Transverse colon (tissue), 4 donors: ENCODE measurements at regions of chr9 and their contacts with region 1.

Region 1: GRCh38 chr9:90142580-90142979 is 500.0 kb downstream of the DIRAS2 start:
- DNase-seq: peak; percentile 69
- H3K4me3 ChIP-seq: no peak overlapping the region
- H3K27ac ChIP-seq: no peak overlapping the region
- H3K4me1 ChIP-seq: peaks cover 0 to 9% (median 0%) of the 10 kb centered on the region in 4 donors
- H3K27me3 ChIP-seq: no peaks in the 10 kb centered on the region
- CTCF ChIP-seq: peak; percentile 50 to 75 (median 65)
- EP300 ChIP-seq: no peak
- POLR2A ChIP-seq: no peak

Region 2: DNA sequence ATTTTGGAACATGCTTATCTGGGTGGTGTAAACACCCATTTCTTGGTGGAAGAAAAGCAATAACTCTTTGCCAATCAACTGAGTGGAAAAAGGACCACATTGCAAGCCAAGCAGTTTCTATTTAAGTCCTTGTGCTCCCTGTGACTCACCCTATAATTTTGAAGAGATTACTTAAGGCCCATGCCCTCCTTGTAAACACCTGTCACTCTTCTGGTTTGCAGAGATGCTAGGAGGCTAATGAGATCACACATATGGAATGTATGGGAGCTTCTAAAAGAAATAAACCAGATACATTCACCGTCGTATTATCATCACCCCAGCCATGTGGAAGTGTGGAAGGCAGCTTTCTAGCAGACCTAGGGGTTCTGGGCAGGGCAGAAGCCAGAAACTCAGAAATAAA is 200.7 kb before region 1 on chr9:
- in situ Hi-C with region 1: no loop called
- intact Hi-C with region 1: no loop called
- DNase-seq: no peak
- H3K4me3 ChIP-seq: no peak overlapping the region
- H3K27ac ChIP-seq: peak overlapping the region; percentile 13 to 77 (median 46)
- H3K4me1 ChIP-seq: peaks cover 5 to 13% (median 9%) of the 10 kb centered on the region in 4 donors
- H3K27me3 ChIP-seq: no peaks in the 10 kb centered on the region
- CTCF ChIP-seq: no peak
- EP300 ChIP-seq: peak; percentile 55
- POLR2A ChIP-seq: no peak

Region 3: GRCh38 chr9:90070931-90071660 is 71.5 kb before region 1 on chr9:
- in situ Hi-C with region 1: no loop called
- intact Hi-C with region 1: no loop called
- DNase-seq: no peak
- H3K4me3 ChIP-seq: no peak overlapping the region
- H3K27ac ChIP-seq: no peak overlapping the region
- H3K4me1 ChIP-seq: no peaks in the 10 kb centered on the region
- H3K27me3 ChIP-seq: no peaks in the 10 kb centered on the region
- CTCF ChIP-seq: no peak
- EP300 ChIP-seq: no peak
- POLR2A ChIP-seq: no peak

Region 4: DNA sequence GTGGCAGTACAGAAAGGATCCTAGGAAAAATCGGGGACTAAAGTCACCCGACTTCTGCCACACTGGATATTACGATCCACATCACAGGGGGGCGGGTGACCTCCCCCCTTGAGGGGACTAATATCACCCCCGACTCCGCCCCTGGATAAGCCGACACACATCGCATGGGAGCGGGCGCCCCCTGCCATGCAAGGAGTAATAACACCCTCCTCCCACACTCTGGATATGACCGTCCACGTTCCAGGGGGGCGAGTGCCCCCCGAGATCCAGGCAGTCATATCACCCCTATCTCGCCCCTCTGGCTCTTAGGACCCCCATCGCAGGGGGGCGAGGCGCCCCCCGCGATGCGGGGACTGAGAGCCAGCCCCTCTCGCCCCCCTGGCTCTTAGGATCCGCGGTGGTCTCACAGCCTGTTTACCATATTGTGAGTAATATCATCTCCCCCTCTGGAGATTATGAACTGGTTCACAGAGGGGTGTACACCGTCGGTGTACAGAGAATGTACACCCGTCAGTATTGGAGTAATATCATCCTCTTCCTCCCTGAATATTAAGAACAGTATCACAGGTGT is 77.1 kb after region 1 on chr9:
- in situ Hi-C with region 1: loop called in 2 of 4 experiments (anchors 5 kb)
- intact Hi-C with region 1: no loop called
- DNase-seq: peak; percentile 41
- H3K4me3 ChIP-seq: peak overlapping the region in 1 of 4 donors; percentile 16
- H3K27ac ChIP-seq: no peak overlapping the region
- H3K4me1 ChIP-seq: peaks cover 0 to 6% (median 3%) of the 10 kb centered on the region in 4 donors
- H3K27me3 ChIP-seq: peaks cover 5% of the 10 kb centered on the region
- CTCF ChIP-seq: peak; percentile 49 to 79 (median 64)
- EP300 ChIP-seq: no peak
- POLR2A ChIP-seq: no peak

Region 5: DNA sequence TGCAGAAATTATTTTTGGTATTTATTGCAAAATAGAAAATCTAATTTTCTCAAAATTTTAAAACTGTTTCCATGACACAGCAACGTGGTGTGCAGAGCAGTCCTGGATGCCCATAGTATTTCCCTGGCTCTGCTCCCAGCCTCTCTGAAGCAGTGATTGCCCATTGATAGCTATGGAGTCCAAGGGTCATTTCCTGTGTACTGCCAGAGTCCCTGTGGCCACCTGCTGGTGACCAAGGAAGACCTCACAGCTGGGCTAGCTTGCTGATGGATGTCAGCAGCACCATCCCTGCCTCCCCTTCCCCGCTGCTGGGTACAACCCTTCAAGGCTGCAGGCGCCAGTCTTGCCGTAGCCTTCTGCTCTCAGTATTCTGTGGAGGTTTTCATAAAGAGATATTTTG is 315.9 kb after region 1 on chr9:
- in situ Hi-C with region 1: loop called in 1 of 4 experiments (anchors 25 kb)
- intact Hi-C with region 1: no loop called
- DNase-seq: peak; percentile 80
- H3K4me3 ChIP-seq: no peak overlapping the region
- H3K27ac ChIP-seq: no peak overlapping the region
- H3K4me1 ChIP-seq: peaks cover 0 to 12% (median 0%) of the 10 kb centered on the region in 4 donors
- H3K27me3 ChIP-seq: no peaks in the 10 kb centered on the region
- CTCF ChIP-seq: peak; percentile 20 to 75 (median 55)
- EP300 ChIP-seq: no peak
- POLR2A ChIP-seq: no peak

Region 6: GRCh38 chr9:90767523-90768100 is 625.0 kb after region 1 on chr9:
- in situ Hi-C with region 1: loop called in 3 of 4 experiments (anchors 10 to 25 kb)
- intact Hi-C with region 1: no loop called
- DNase-seq: no peak
- H3K4me3 ChIP-seq: no peak overlapping the region
- H3K27ac ChIP-seq: no peak overlapping the region
- H3K4me1 ChIP-seq: no peaks in the 10 kb centered on the region
- H3K27me3 ChIP-seq: no peaks in the 10 kb centered on the region
- CTCF ChIP-seq: no peak
- EP300 ChIP-seq: no peak
- POLR2A ChIP-seq: no peak

Region 7: GRCh38 chr9:90773617-90774016 is 631.0 kb after region 1 on chr9:
- in situ Hi-C with region 1: loop called in 3 of 4 experiments (anchors 10 to 25 kb)
- intact Hi-C with region 1: no loop called
- DNase-seq: peak; percentile 26
- H3K4me3 ChIP-seq: no peak overlapping the region
- H3K27ac ChIP-seq: no peak overlapping the region
- H3K4me1 ChIP-seq: no peaks in the 10 kb centered on the region
- H3K27me3 ChIP-seq: no peaks in the 10 kb centered on the region
- CTCF ChIP-seq: peak; percentile 7 to 31 (median 29)
- EP300 ChIP-seq: no peak
- POLR2A ChIP-seq: no peak

Region 8: GRCh38 chr9:90860826-90861225 is 718.2 kb after region 1 on chr9:
- in situ Hi-C with region 1: loop called in 2 of 4 experiments (anchors 10 to 25 kb)
- intact Hi-C with region 1: loop called (anchors 10 kb)
- DNase-seq: no peak
- H3K4me3 ChIP-seq: no peak overlapping the region
- H3K27ac ChIP-seq: no peak overlapping the region
- H3K4me1 ChIP-seq: no peaks in the 10 kb centered on the region
- H3K27me3 ChIP-seq: no peaks in the 10 kb centered on the region
- CTCF ChIP-seq: no peak
- EP300 ChIP-seq: no peak
- POLR2A ChIP-seq: no peak

Region 9: GRCh38 chr9:90870621-90871326 is 728.2 kb after region 1 on chr9:
- in situ Hi-C with region 1: loop called in 3 of 4 experiments (anchors 10 to 25 kb)
- intact Hi-C with region 1: loop called (anchors 10 kb)
- DNase-seq: peak; percentile 37
- H3K4me3 ChIP-seq: no peak overlapping the region
- H3K27ac ChIP-seq: no peak overlapping the region
- H3K4me1 ChIP-seq: no peaks in the 10 kb centered on the region
- H3K27me3 ChIP-seq: no peaks in the 10 kb centered on the region
- CTCF ChIP-seq: peak; percentile 68 to 86 (median 81)
- EP300 ChIP-seq: no peak
- POLR2A ChIP-seq: no peak